Caco-2 (cell line): ENCODE measurements at regions of chr7 and their contacts with region 1.

Region 1: GRCh38 chr7:16847366-16847864 is 34.4 kb downstream of the AGR3 start:
- DNase-seq: peak; percentile 91 to 96
- H3K4me3 ChIP-seq: no peak overlapping the region
- H3K4me3 Mint-ChIP-seq: peak overlapping the region; percentile 64
- H3K27ac Mint-ChIP-seq: peak overlapping the region; percentile 86
- H3K4me1 ChIP-seq: peaks cover 48% of the 10 kb centered on the region
- H3K4me1 Mint-ChIP-seq: peaks cover 39% of the 10 kb centered on the region
- H3K27me3 ChIP-seq: no peaks in the 10 kb centered on the region
- H3K27me3 Mint-ChIP-seq: no peaks in the 10 kb centered on the region
- CTCF ChIP-seq: no peak

Region 2: GRCh38 chr7:16753102-16753931 is 94.1 kb before region 1 on chr7 and contains the start of gene TSPAN13:
- CTCF ChIA-PET with region 1: no interaction called
- POLR2A ChIA-PET with region 1: no interaction called
- intact Hi-C with region 1: loop called (anchors 2 kb)
- DNase-seq: peak; percentile 98 to 99
- H3K4me3 ChIP-seq: peak within 1 kb of the TSS; percentile 91
- H3K4me3 Mint-ChIP-seq: peak within 1 kb of the TSS; percentile 92
- H3K27ac Mint-ChIP-seq: peak within 1 kb of the TSS; percentile 91
- H3K4me1 ChIP-seq: peaks cover 20% of the 10 kb centered on the region
- H3K4me1 Mint-ChIP-seq: peaks cover 20% of the 10 kb centered on the region
- H3K27me3 ChIP-seq: no peaks in the 10 kb centered on the region
- H3K27me3 Mint-ChIP-seq: no peaks in the 10 kb centered on the region
- CTCF ChIP-seq: no peak
- total RNA-seq, gene TSPAN13: 193 and 208 TPM in 2 replicates

Region 3: GRCh38 chr7:16811551-16811950 is 35.9 kb before region 1 on chr7:
- CTCF ChIA-PET with region 1: no interaction called
- POLR2A ChIA-PET with region 1: no interaction called
- intact Hi-C with region 1: loop called (anchors 1 kb)
- DNase-seq: no peak
- H3K4me3 ChIP-seq: no peak overlapping the region
- H3K4me3 Mint-ChIP-seq: peak overlapping the region; percentile 54
- H3K27ac Mint-ChIP-seq: peak overlapping the region; percentile 80
- H3K4me1 ChIP-seq: peaks cover 55% of the 10 kb centered on the region
- H3K4me1 Mint-ChIP-seq: peaks cover 54% of the 10 kb centered on the region
- H3K27me3 ChIP-seq: no peaks in the 10 kb centered on the region
- H3K27me3 Mint-ChIP-seq: no peaks in the 10 kb centered on the region
- CTCF ChIP-seq: no peak

Region 4: DNA sequence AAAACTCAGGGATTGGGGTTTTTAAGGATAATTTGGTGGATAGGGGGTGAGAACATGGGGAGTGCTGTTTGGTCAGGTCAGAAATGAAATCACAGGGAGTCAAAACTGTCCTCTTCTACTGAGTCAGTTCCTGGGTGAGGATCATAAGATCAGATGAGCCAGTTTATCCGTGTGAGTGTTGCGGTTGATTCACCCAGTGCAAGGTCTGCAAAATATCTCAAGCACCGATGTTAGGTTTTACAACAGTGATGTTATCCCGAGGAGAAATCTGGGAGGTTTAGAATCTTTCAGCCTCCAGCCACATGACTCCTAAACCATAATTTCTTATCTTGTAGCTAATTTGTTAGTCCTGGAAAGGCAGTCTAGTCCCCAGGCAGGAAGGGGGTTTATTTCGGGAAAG is 10.9 kb before region 1 on chr7:
- CTCF ChIA-PET with region 1: no interaction called
- POLR2A ChIA-PET with region 1: no interaction called
- intact Hi-C with region 1: no loop called
- DNase-seq: no peak
- H3K4me3 ChIP-seq: no peak overlapping the region
- H3K4me3 Mint-ChIP-seq: no peak overlapping the region
- H3K27ac Mint-ChIP-seq: no peak overlapping the region
- H3K4me1 ChIP-seq: peaks cover 4% of the 10 kb centered on the region; the same call in 1 of the 2 replicates
- H3K4me1 Mint-ChIP-seq: peaks cover 15% of the 10 kb centered on the region
- H3K27me3 ChIP-seq: no peaks in the 10 kb centered on the region
- H3K27me3 Mint-ChIP-seq: no peaks in the 10 kb centered on the region
- CTCF ChIP-seq: no peak

Region 5: GRCh38 chr7:16881844-16882243 is 34.4 kb after region 1 on chr7 and contains the start of gene AGR3:
- CTCF ChIA-PET with region 1: no interaction called
- POLR2A ChIA-PET with region 1: no interaction called
- intact Hi-C with region 1: loop called (anchors 5 kb)
- DNase-seq: peak in 1 of 2 experiments; percentile 45
- H3K4me3 ChIP-seq: peak within 1 kb of the TSS; percentile 12; the same call in 1 of the 2 replicates
- H3K4me3 Mint-ChIP-seq: no peak within 1 kb of the TSS
- H3K27ac Mint-ChIP-seq: peak within 1 kb of the TSS; percentile 50
- H3K4me1 ChIP-seq: 0 out of 2 replicates have a peak, but pooled peaks cover 5% of the 10 kb centered on the region
- H3K4me1 Mint-ChIP-seq: no peaks in the 10 kb centered on the region
- H3K27me3 ChIP-seq: no peaks in the 10 kb centered on the region
- H3K27me3 Mint-ChIP-seq: no peaks in the 10 kb centered on the region
- CTCF ChIP-seq: no peak
- total RNA-seq, gene AGR3: 1.2 and 3.1 TPM in 2 replicates

Region 6: GRCh38 chr7:16905300-16906044 is 58.1 kb after region 1 on chr7:
- CTCF ChIA-PET with region 1: interaction called, 3 read pairs
- POLR2A ChIA-PET with region 1: interaction called, 3 read pairs
- intact Hi-C with region 1: loop called (anchors 1 kb)
- DNase-seq: peak; percentile 57 to 59
- H3K4me3 ChIP-seq: no peak overlapping the region
- H3K4me3 Mint-ChIP-seq: peak overlapping the region; percentile 43
- H3K27ac Mint-ChIP-seq: peak overlapping the region; percentile 16
- H3K4me1 ChIP-seq: peaks cover 21% of the 10 kb centered on the region
- H3K4me1 Mint-ChIP-seq: peaks cover 35% of the 10 kb centered on the region
- H3K27me3 ChIP-seq: no peaks in the 10 kb centered on the region
- H3K27me3 Mint-ChIP-seq: no peaks in the 10 kb centered on the region
- CTCF ChIP-seq: no peak